ENCODE measurements at regions of chr14 and their contacts with region 1.

Region 1: DNA sequence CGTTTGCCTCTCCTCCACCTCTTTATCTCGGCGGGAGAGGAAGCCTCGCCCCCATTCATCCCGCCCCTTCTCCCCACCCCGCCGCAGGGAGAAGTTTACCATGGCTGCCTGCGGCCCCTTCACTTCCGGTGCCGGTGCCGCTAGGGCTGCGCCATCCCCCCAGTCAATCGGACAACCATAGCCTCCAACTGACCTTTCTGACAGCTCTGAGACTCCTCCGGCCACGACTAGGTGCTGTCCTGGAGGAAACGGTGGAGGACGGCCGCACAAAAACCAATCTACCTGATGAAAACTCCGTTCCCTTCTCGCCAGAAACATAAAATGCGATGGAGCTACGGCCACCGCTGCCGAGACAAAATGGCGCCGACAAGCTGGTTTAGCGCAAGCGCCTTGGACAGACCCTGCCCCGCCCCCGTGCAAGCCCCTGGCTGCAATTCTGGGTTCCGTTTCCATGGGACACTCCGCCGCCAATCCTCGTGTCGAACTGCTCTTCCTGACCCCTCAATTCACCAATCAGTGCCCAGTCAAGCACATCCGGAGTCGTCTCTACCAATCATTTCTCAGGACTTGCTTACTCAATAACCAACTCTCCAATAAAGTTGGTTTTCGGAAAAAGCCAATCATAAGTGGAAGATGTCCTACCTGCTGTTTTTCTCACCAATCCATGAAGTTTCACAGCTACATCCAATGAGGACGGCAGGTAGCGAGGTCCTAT is 436 bp upstream of the ARID4A start:
- DNase-seq: peak; percentile 99
- H3K4me3 Mint-ChIP-seq: no peak overlapping the region
- H3K27ac Mint-ChIP-seq: no peak overlapping the region
- H3K4me1 Mint-ChIP-seq: peaks cover 43% of the 10 kb centered on the region
- H3K27me3 Mint-ChIP-seq: no peaks in the 10 kb centered on the region

Region 2: DNA sequence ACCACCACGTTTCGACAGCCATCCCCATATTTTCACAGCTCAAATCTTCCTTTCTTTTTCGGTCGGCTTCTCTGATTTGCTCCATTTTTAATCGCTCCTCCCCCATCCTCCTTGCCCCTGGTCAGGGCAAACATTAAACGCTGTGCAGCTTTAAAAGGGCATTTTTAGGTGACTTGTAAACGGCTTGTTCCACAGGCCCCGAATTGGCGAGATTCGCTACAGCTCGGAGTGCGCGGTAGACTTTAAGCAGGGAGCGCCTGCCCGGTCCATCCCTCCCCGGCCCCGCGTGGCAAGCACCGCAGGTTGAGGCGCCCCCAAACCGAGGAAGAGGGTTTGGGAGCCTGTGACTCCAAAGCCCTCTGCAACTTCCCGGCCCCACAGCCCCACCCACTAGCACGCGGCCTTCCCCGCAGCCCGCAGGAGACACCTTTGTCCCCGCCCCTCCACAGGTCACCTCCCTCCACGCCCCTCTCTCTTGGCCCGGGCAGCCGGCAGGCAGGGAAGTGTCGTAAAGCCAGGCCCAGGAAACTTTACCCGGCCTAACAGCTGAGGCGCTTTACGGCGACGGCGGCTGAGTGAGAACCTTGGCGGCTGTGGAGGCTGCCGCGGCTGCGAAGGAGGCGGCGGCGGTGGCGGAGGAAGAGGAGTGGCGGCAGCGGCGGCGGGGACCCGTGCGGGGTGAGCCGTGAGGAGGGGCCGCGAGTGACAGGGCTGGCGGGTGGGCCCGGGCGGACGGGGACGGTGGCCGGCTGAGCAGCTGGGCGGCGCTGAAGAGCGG is 907.7 kb before region 1 on chr14 and contains the start of gene NAA30:
- CTCF ChIA-PET with region 1: no interaction called
- intact Hi-C with region 1: loop called (anchors 10 kb)
- DNase-seq: peak; percentile 95
- H3K4me3 Mint-ChIP-seq: peak within 1 kb of the TSS; percentile 89
- H3K27ac Mint-ChIP-seq: peak within 1 kb of the TSS; percentile 93
- H3K4me1 Mint-ChIP-seq: peaks cover 35% of the 10 kb centered on the region
- H3K27me3 Mint-ChIP-seq: no peaks in the 10 kb centered on the region
- total RNA-seq, gene NAA30: 12.3 to 12.5 TPM

Region 3: GRCh38 chr14:58199726-58200479 is 98.0 kb before region 1 on chr14 and contains the start of gene ACTR10:
- CTCF ChIA-PET with region 1: no interaction called
- intact Hi-C with region 1: loop called (anchors 1 kb)
- DNase-seq: peak; percentile 89
- H3K4me3 Mint-ChIP-seq: peak within 1 kb of the TSS; percentile 93
- H3K27ac Mint-ChIP-seq: peak within 1 kb of the TSS; percentile 87
- H3K4me1 Mint-ChIP-seq: peaks cover 39% of the 10 kb centered on the region
- H3K27me3 Mint-ChIP-seq: no peaks in the 10 kb centered on the region
- total RNA-seq, gene ACTR10: 29.5 to 29.7 TPM

Region 4: GRCh38 chr14:58244556-58245387 is 53.1 kb before region 1 on chr14 and contains the start of gene PSMA3:
- CTCF ChIA-PET with region 1: interaction called, 3 read pairs
- intact Hi-C with region 1: loop called (anchors 1 kb)
- DNase-seq: peak; percentile 99
- H3K4me3 Mint-ChIP-seq: peak within 1 kb of the TSS; percentile 98
- H3K27ac Mint-ChIP-seq: peak within 1 kb of the TSS; percentile 99
- H3K4me1 Mint-ChIP-seq: peaks cover 43% of the 10 kb centered on the region
- H3K27me3 Mint-ChIP-seq: no peaks in the 10 kb centered on the region
- total RNA-seq, gene PSMA3: 399 to 424 TPM

Region 5: GRCh38 chr14:58287607-58288042 is 10.3 kb before region 1 on chr14:
- CTCF ChIA-PET with region 1: no interaction called
- intact Hi-C with region 1: loop called (anchors 1 kb)
- DNase-seq: no peak
- H3K4me3 Mint-ChIP-seq: no peak overlapping the region
- H3K27ac Mint-ChIP-seq: peak overlapping the region; percentile 88
- H3K4me1 Mint-ChIP-seq: peaks cover 65% of the 10 kb centered on the region
- H3K27me3 Mint-ChIP-seq: no peaks in the 10 kb centered on the region

Region 6: DNA sequence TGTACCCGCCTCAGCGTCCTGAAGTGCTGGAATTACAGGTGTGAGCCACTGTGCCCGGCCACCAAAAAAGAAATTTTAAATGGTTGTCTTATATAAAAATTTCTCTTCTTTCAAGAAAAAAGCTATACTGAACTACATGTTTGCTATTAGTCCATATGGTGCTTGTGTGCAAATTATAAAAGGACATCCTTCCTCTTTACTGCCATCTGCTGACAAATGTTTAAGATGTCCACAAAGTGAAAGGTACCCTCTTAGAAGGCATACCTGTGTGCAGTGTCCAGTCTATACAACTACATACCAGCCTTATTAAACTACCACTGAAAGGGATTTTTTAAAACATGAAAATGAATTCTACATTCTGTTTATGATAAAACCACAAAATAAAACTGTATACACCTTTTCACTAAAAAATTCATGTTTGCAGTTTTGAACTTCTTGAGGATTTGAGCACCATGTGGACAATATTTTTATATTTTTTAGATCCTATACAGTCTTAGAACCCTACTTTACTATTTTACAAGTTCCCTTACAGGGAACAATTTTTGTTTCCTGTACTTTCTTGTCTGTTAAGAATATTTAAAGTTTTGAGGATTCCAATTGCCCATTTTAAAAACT is 65.0 kb after region 1 on chr14:
- CTCF ChIA-PET with region 1: no interaction called
- intact Hi-C with region 1: loop called (anchors 1 kb)
- DNase-seq: no peak
- H3K4me3 Mint-ChIP-seq: no peak overlapping the region
- H3K27ac Mint-ChIP-seq: no peak overlapping the region
- H3K4me1 Mint-ChIP-seq: peaks cover 2% of the 10 kb centered on the region
- H3K27me3 Mint-ChIP-seq: no peaks in the 10 kb centered on the region